ENCODE measurements at regions of chr2 and their contacts with region 1.

Region 1: GRCh38 chr2:168961450-168962229 is 60.5 kb downstream of the G6PC2 start:
- DNase-seq: no peak
- H3K4me3 ChIP-seq: no peak overlapping the region
- H3K27ac ChIP-seq: no peak overlapping the region
- H3K4me1 ChIP-seq: no peaks in the 10 kb centered on the region
- H3K27me3 ChIP-seq: no peaks in the 10 kb centered on the region
- CTCF ChIP-seq: peak; percentile 81 to 88 (median 87)
- POLR2A ChIP-seq: no peak

Region 2: DNA sequence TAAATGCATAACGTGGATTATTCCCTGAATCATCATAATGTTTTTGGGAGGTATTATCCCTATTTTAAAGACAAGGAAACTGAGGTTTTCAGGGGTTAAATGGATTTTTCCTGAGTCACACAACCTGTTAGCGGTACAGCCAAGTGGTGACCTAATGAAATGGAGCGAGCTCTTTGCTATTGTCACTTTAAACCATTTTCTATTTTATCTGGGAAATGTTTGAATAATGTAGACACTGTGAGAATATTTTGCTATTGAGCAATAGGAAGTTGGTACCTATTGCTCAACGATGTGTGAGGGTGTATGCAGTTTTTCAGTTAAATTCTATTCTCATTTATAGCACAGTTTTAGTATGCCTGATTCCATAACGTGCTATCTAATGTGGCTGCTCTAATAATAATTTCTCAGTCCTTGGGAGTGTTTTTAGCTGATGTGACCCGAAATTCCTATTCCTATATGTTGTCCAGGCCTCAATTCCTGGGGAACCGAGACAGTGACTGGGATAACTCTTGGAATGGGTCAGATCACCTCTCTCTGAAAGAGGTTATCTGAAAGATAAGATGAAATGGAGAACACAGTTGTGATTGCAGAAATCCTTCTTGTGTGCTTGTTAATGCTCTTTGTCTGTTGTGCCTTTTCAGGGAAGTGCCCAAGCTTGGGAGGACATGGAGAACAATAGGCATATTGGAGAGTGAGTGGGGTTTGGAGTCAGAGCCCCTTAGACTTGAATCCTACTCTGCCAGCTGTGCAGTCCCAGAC is 31.1 kb after region 1 on chr2:
- intact Hi-C with region 1: no loop called
- DNase-seq: no peak
- H3K4me3 ChIP-seq: no peak overlapping the region
- H3K27ac ChIP-seq: no peak overlapping the region
- H3K4me1 ChIP-seq: no peaks in the 10 kb centered on the region
- H3K27me3 ChIP-seq: no peaks in the 10 kb centered on the region
- CTCF ChIP-seq: no peak
- POLR2A ChIP-seq: no peak

Region 3: GRCh38 chr2:169141713-169142352 is 180.2 kb after region 1 on chr2:
- intact Hi-C with region 1: loop called (anchors 10 kb)
- DNase-seq: peak; percentile 26 to 53
- H3K4me3 ChIP-seq: no peak overlapping the region
- H3K27ac ChIP-seq: no peak overlapping the region
- H3K4me1 ChIP-seq: no peaks in the 10 kb centered on the region
- H3K27me3 ChIP-seq: no peaks in the 10 kb centered on the region
- CTCF ChIP-seq: peak; percentile 44 to 73 (median 56)
- POLR2A ChIP-seq: no peak

Measured in breast epithelium (tissue), 4 donors.